HCT116 (cell line): ENCODE measurements at regions of chr12 and their contacts with region 1.

Region 1: GRCh38 chr12:76878899-76879709 is at the start of gene CSRP2:
- DNase-seq: peak; percentile 75
- ATAC-seq: peak; percentile 91
- H3K4me3 ChIP-seq: peak within 1 kb of the TSS; percentile 70 to 77
- H3K27ac ChIP-seq: peak within 1 kb of the TSS; percentile 63
- H3K4me1 ChIP-seq: peaks cover 4 to 27% of the 10 kb centered on the region in 2 experiments; a peak in 3 of 4 replicates
- H3K27me3 ChIP-seq: no peaks in the 10 kb centered on the region
- CTCF ChIP-seq: peak in 2 of 3 experiments; percentile 20 to 25; a peak in 3 of 6 replicates
- POLR2A ChIP-seq: peak; percentile 91
- RAD21 ChIP-seq: no peak
- total RNA-seq, gene CSRP2: 36.1 TPM

Region 2: DNA sequence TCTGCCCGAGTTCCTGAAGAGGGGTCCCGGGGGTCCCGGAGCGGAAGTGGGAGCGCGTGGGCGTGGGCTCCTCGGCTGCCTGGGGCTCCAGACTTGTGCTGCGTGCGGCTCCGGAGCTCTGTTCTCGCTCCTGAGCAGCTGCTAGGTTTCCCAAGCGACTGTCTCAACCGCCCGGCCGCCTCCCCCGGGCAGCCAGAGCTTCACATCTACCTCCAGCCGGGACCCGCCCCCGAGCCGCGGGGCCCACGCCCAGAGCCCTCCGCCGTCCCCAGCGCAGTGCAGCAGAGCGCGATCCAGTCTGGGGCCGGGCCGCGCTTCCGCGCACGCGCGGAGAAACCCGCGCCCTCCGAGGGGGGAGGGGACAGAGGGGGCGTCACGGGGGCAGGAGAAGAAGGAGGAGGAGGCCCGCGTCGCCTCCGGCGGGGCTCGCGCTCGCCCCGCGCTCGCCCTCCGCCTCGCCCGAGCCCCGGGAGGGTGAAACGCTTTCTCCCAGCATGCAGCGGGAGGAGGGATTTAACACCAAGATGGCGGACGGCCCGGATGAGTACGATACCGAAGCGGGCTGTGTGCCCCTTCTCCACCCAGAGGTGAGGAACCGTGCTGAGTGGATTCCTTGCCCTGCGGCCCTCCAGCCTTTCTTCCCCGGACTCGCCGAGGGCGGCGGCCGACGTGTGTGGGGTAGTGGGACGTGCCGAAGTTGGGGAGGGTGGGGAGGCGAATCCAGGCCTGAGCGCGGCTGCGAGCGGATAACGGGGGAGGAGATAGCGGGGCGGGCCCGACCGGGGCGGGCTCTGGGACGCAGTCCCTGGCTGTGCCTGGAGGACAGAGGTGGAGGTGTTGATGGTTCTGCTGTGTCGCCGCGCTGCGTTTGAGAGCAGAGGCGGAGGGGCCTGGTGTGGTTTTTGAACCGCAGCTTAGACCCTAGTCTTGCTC is 115.1 kb before region 1 on chr12 and contains the start of gene ZDHHC17:
- CTCF ChIA-PET with region 1: no interaction called
- POLR2A ChIA-PET with region 1: no interaction called
- RAD21 ChIA-PET with region 1: no interaction called
- intact Hi-C with region 1: loop called (anchors 2 kb)
- DNase-seq: peak; percentile 78
- ATAC-seq: peak; percentile 91
- H3K4me3 ChIP-seq: peak within 1 kb of the TSS; percentile 87 to 88
- H3K27ac ChIP-seq: peak within 1 kb of the TSS; percentile 83
- H3K4me1 ChIP-seq: peaks cover 8 to 14% of the 10 kb centered on the region in 2 experiments; a peak in 3 of 4 replicates
- H3K27me3 ChIP-seq: no peaks in the 10 kb centered on the region
- CTCF ChIP-seq: no peak
- POLR2A ChIP-seq: peak; percentile 77
- RAD21 ChIP-seq: no peak
- total RNA-seq, gene ZDHHC17: 25.3 TPM